PC-3 (cell line): ENCODE measurements at regions of chr5 and their contacts with region 1.

Region 1: GRCh38 chr5:107469485-107470294 is 201.0 kb downstream of the EFNA5 start:
- DNase-seq: peak; percentile 86
- ATAC-seq: peak; percentile 75
- H3K4me3 ChIP-seq: peak overlapping the region; percentile 20; the same call in 1 of the 2 replicates
- H3K27ac ChIP-seq: peak overlapping the region; percentile 85
- H3K4me1 ChIP-seq: peaks cover 87% of the 10 kb centered on the region
- H3K27me3 ChIP-seq: no peaks in the 10 kb centered on the region
- CTCF ChIP-seq: no peak

Region 2: GRCh38 chr5:107542428-107542827 is 72.7 kb after region 1 on chr5:
- CTCF ChIA-PET with region 1: no interaction called
- POLR2A ChIA-PET with region 1: no interaction called
- intact Hi-C with region 1: loop called (anchors 2 kb)
- DNase-seq: peak; percentile 96
- ATAC-seq: peak; percentile 93
- H3K4me3 ChIP-seq: peak overlapping the region; percentile 47
- H3K27ac ChIP-seq: peak overlapping the region; percentile 75
- H3K4me1 ChIP-seq: peaks cover 18% of the 10 kb centered on the region
- H3K27me3 ChIP-seq: no peaks in the 10 kb centered on the region
- CTCF ChIP-seq: no peak

Region 3: DNA sequence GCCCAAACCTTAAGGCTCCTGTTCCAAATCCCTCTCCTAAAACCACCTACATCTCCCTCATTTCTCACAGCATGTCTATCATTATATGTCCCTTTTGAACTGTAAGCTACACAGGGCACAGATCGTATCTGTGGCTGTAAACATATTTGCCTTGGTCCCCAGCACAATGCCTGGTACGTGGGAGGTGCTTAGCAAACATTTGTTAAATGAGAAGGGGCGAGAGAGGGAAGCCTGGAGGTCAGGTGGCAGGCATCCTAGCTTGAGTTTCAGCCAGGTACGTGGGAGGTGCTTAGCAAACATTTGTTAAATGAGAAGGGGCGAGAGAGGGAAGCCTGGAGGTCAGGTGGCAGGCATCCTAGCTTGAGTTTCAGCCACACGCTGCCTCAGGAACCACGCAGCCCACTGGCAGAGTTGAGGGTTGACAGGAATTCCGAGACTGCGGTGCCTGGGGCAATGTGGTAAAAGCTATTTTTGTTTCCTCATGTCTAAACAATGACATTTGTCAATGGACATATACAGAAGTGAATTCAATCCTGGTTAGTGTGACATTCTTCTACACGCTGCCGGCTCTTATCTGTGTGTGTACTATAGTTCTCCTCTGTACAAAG is 87.5 kb after region 1 on chr5:
- CTCF ChIA-PET with region 1: interaction called, 3 read pairs
- POLR2A ChIA-PET with region 1: no interaction called
- intact Hi-C with region 1: loop called (anchors 5 kb)
- DNase-seq: peak; percentile 86
- ATAC-seq: peak; percentile 80
- H3K4me3 ChIP-seq: peak overlapping the region; percentile 4; the same call in 1 of the 2 replicates
- H3K27ac ChIP-seq: peak overlapping the region; percentile 53
- H3K4me1 ChIP-seq: peaks cover 36% of the 10 kb centered on the region
- H3K27me3 ChIP-seq: no peaks in the 10 kb centered on the region
- CTCF ChIP-seq: no peak

Region 4: GRCh38 chr5:107661038-107661649 is 191.5 kb after region 1 on chr5:
- CTCF ChIA-PET with region 1: no interaction called
- POLR2A ChIA-PET with region 1: no interaction called
- intact Hi-C with region 1: no loop called
- DNase-seq: no peak
- ATAC-seq: no peak
- H3K4me3 ChIP-seq: no peak overlapping the region
- H3K27ac ChIP-seq: no peak overlapping the region
- H3K4me1 ChIP-seq: no peaks in the 10 kb centered on the region
- H3K27me3 ChIP-seq: no peaks in the 10 kb centered on the region
- CTCF ChIP-seq: no peak